AG04449 (cell line): ENCODE measurements at regions of chr19 and their contacts with region 1.

Region 1: DNA sequence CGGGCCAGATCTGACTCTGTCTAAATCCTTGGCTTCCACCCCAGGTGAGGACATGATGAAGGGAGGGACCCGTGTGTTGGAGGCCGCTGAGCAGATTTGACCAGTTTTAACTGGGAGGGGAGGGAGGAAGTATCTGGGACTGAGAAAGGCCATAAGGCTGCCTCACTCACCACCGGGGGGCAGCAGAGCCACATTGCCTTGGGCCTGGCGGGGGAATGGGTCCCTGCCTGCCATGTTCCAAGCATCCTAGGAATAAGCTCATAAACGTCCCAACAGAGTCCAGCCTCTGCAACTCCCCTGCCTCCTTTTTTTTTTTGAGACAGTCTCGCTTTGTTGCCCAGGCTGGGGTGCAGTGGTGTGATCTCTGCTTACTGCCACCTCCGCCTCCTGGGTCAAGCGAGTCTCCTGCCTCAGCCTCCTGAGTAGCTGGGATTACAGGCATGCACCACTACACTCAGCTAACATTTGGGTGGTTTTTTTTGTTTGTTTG is 15.5 kb downstream of the MAST3 start:
- DNase-seq: no peak
- H3K4me3 ChIP-seq: no peak overlapping the region
- CTCF ChIP-seq: peak; percentile 95

Region 2: DNA sequence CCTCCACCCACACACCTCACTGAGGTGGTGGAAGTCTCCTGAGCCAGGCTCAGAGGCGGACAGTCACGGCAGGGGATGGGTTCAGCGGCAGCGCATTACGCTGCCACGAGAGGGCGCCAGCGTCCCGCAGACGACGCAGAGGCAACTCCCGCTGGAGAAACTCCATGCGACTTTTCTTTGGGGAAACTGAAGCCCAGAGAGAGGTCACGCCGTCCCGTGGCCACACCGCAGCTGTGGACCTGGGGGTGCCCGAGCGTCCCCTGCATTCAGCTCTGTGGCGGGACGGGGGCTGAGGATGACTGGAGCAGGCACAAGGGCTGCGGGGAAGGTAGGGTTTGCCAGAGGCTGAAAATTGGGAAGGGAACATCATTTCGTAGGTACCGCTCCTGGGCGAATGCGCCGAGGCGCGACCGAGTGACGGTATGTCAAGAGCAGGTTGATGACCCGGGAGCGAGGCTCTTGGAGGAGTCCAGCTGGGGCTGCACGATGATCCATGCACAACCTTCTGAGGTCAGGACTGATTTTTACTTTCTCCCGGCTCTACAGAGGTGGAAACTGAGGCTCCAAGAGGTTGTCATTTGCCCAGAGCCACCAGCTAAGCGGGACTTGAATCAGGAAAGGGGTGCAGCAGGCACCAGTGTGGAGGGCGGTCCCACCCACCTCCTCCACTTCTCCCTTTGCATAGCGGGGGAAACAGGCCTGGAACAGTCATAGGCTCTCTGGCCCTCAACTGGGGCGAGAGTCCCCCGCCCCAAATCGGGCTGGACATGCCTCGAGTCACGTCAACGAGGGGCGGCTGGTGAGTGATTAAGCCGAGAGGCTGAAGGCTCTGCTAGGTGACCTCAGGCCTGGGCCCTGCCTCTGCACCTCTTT is 105.8 kb before region 1 on chr19:
- CTCF ChIA-PET with region 1: interaction called, 21 read pairs
- POLR2A ChIA-PET with region 1: no interaction called
- DNase-seq: no peak
- H3K4me3 ChIP-seq: peak overlapping the region; percentile 60
- CTCF ChIP-seq: peak; percentile 97

Region 3: DNA sequence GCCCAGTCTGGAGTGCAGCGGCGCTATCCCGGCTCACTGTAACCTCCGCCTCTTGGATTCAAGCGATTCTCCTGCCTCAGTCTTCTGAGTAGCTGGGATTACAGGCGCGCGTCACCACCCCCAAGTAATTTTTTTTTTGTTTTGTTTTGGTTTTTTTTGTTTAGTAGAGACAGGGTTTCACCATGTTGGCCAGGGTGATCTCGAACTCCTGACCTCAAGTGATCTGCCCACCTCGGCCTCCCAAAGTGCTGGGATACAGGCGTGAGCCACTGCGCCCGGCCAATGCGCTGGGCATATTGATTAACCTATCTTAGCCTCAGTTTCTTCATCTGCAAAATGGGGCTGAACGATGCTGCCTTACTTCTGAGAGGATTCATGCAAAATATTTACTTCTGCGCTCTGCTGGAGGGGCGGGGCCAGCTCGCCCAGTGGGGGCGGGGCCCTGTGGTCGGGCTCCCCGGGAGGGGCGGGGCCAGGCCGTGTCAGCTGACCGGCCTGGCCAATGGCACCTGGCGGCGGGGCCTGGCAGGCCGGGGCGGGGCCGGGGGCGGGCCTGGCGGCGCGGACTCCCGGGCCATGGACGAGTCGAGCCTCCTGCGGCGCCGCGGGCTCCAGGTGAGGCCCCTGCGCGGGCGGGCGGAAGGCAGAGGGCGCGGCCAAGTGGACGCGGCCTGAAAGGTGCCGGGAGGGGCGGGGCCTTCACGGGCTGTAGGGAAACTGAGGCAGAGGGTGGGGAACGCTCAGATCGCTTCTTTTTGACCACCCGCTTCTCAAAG is 15.6 kb before region 1 on chr19 and contains the start of gene MAST3:
- CTCF ChIA-PET with region 1: interaction called, 14 read pairs
- POLR2A ChIA-PET with region 1: no interaction called
- DNase-seq: no peak
- H3K4me3 ChIP-seq: peak within 1 kb of the TSS; percentile 57
- CTCF ChIP-seq: no peak

Region 4: GRCh38 chr19:18102916-18103542 is 10.0 kb before region 1 on chr19:
- CTCF ChIA-PET with region 1: interaction called, 14 read pairs
- POLR2A ChIA-PET with region 1: no interaction called
- DNase-seq: no peak
- H3K4me3 ChIP-seq: no peak overlapping the region
- CTCF ChIP-seq: no peak

Region 5: DNA sequence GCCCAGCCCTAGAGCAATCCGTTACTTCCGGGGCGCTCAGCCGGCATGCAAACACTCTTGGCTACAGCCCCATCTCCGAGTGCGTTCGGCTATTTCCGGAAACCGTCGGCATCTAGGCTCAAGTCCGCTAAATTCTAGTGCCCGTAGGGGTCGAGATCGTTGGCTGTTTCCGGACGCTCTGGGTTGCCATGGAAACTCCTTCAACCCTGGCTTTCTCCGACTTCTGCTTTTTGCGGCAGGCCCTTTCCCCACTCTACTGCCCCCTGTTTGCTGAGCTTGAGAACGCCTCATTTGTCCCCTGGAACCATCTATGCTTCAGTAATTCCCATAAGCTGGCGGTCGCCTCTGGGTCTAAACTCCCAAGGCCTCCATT is 39.4 kb after region 1 on chr19:
- CTCF ChIA-PET with region 1: interaction called, 20 read pairs
- POLR2A ChIA-PET with region 1: no interaction called
- DNase-seq: peak; percentile 74
- H3K4me3 ChIP-seq: peak overlapping the region; percentile 66
- CTCF ChIP-seq: peak; percentile 68

Region 6: DNA sequence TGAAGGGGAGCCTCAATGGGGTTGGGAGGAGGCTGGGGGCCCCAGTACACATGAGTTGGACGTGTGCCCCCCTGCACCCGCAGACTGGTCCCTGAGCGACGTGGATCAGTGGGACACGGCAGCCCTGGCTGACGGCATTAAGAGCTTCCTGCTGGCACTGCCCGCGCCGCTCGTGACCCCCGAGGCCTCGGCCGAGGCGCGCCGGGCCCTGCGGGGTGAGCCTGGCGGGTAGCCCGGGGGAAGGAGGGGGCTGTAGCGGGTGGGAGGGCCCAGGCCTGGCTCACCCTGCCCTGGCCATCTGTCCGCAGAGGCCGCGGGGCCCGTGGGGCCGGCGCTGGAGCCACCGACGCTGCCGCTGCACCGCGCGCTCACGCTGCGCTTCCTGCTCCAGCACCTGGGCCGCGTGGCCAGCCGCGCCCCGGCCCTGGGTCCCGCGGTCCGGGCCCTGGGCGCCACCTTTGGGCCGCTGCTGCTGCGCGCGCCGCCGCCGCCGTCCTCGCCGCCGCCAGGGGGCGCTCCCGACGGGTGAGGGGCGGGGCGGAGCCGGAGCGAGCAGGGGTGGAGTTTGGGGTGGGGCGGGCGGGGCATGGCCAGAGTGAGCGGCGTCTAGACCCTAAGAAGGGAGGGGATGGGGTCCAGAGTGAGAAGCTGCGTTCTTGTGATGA is 48.1 kb after region 1 on chr19:
- CTCF ChIA-PET with region 1: interaction called, 50 read pairs
- POLR2A ChIA-PET with region 1: interaction called, 3 read pairs
- DNase-seq: no peak
- H3K4me3 ChIP-seq: peak overlapping the region; percentile 27
- CTCF ChIP-seq: peak; percentile 55

Region 7: DNA sequence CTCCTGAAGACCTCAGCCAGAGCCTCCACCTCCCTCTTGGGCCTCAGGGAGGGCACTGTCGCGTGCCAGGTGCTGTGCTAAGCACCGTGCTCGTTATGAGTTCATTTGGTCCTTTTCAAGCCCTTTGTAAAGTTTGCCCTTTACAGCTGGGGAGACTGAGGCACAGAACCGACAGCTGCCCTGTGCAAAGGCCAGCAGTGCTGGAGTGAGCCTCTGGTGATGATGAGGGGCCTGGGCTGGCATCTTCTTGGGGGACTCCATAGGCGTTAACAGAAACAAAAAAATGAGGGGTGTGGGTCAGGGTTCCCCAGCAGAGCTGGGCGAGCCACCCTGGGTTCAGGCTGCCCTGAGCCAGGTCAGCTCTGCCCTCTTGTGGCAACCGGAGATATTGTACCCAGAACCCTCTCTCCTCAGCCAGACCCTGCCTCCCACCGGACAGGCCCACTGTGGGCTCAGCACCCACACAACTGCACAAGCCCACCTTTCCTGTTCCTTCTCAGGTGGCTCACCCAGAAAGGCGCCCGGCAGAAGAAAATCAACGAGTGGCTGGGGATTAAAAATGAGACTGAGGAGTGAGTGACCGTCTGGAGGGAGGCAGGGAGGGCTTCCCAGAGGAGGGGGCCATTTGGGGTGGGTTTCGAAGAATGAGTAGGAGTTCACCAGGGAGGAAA is 55.1 kb after region 1 on chr19:
- CTCF ChIA-PET with region 1: interaction called, 50 read pairs
- POLR2A ChIA-PET with region 1: interaction called, 3 read pairs
- DNase-seq: no peak
- H3K4me3 ChIP-seq: no peak overlapping the region
- CTCF ChIP-seq: peak; percentile 72